ENCODE measurements at regions of chr9 and their contacts with region 1.

Region 1: GRCh38 chr9:89334151-89334550 is 15.9 kb downstream of the SECISBP2 start:
- DNase-seq: no peak
- H3K4me3 ChIP-seq: no peak overlapping the region
- H3K27ac ChIP-seq: no peak overlapping the region
- H3K4me1 ChIP-seq: no peaks in the 10 kb centered on the region
- H3K27me3 ChIP-seq: no peaks in the 10 kb centered on the region
- CTCF ChIP-seq: no peak
- EP300 ChIP-seq: no peak
- POLR2A ChIP-seq: no peak
- RAD21 ChIP-seq: no peak

Region 2: GRCh38 chr9:89122949-89123348 is 211.2 kb before region 1 on chr9:
- CTCF ChIA-PET with region 1: no interaction called
- POLR2A ChIA-PET with region 1: no interaction called
- DNase-seq: no peak
- H3K4me3 ChIP-seq: no peak overlapping the region
- H3K27ac ChIP-seq: no peak overlapping the region
- H3K4me1 ChIP-seq: no peaks in the 10 kb centered on the region
- H3K27me3 ChIP-seq: no peaks in the 10 kb centered on the region
- CTCF ChIP-seq: no peak
- EP300 ChIP-seq: no peak
- POLR2A ChIP-seq: no peak
- RAD21 ChIP-seq: no peak

Region 3: DNA sequence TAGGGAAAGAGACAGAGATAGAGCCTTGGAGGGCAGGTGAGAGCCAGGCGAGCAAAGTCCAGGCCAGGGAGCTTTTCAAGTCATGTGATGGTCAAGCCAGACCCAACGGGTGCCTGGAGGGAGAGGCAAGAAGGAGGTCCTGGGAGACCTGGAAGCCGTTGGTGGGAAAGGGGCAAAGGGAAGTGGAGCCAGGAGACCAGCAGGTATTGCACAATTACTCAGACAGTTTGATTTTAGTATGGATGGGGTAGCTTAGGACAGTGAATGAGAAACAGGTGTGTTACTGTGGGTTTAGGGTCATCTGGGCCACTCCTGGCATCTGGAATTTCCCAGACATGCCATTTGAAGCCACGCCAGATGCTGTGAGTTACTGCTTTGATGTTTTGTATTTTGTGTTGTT is 10.8 kb before region 1 on chr9:
- CTCF ChIA-PET with region 1: interaction called, 3 read pairs
- POLR2A ChIA-PET with region 1: interaction called, 30 read pairs
- DNase-seq: no peak
- H3K4me3 ChIP-seq: no peak overlapping the region
- H3K27ac ChIP-seq: no peak overlapping the region
- H3K4me1 ChIP-seq: peaks cover 0 to 3% (median 0%) of the 10 kb centered on the region in 4 experiments; a peak in 2 of 7 replicates
- H3K27me3 ChIP-seq: no peaks in the 10 kb centered on the region
- CTCF ChIP-seq: no peak
- EP300 ChIP-seq: no peak
- POLR2A ChIP-seq: no peak
- RAD21 ChIP-seq: no peak

Region 4: DNA sequence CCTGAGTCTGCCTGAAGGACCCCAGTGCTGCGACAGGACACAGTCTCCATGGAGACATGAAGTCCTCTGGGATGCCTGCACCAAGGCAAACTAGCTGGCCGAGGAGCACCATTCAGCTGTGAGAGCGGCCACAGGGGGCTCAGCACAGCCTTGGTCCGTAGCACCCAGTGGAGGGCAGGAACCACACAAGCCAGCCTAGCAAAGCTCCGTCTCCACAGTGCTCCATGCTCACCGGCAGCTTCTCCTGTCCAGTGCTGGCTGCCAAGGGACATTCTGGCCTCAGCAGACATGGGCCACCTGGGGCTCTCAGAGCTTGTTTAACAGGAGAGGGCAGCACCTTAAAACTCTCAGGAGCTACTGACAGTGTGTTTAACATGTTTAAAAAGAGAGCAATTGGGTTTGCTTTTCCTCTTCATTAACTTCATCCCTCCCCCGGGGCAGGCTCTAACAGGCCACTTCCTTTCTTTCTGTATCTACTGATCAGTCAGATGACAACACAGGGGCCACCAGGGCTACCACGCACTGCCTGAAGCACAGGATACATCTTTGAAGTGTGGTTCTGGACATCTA is 41.1 kb after region 1 on chr9:
- CTCF ChIA-PET with region 1: no interaction called
- POLR2A ChIA-PET with region 1: no interaction called
- DNase-seq: no peak
- H3K4me3 ChIP-seq: no peak overlapping the region
- H3K27ac ChIP-seq: no peak overlapping the region
- H3K4me1 ChIP-seq: no peaks in the 10 kb centered on the region
- H3K27me3 ChIP-seq: no peaks in the 10 kb centered on the region
- CTCF ChIP-seq: no peak
- EP300 ChIP-seq: no peak
- POLR2A ChIP-seq: no peak
- RAD21 ChIP-seq: no peak

Region 5: DNA sequence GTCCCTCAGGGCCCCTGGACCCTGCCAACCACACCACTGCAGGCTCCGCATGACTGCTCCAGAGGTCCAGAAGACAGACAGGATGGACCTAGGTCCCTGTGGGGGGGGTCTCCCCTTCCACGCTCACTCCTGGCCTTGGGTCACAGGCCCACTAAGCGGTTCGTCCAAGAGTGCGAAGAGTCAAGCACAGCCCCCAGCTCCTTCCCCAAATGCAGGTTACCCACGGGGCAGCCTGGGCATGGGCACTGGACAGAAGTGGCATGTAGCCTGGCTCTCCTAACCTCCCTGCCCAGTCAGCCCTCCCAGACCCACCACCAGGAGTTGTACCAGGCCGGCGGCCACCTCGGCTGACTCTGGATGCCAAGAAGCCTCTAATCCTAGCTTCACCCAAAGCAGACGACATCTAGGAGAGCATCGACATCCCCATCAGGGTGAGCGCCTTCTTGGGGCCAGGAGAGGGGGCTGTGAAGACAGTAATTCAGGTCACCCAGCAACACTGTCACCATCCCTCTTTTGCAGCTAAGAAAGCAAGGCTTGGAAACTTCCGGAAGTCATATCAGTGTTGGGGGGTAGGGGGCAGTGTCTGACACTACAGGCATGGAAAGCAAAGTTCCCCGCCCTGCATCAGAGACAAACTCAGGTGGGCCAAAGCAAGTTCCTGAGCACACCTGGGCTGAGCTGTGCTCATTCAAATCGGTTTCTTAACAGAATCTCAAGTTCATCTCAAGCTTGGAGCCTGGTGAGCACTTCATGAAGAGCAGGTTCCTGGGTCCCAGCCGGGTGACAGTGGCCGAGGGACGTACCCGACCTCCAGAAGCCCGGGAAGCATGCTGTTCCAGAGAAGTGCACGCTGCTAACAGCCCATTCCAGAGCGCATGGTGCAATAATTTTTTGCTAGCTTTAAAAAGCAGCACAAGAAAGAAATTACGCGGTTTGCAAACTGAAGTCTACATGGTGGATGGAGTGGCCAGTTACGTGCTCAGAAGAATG is 95.0 kb after region 1 on chr9:
- CTCF ChIA-PET with region 1: no interaction called
- POLR2A ChIA-PET with region 1: no interaction called
- DNase-seq: peak; percentile 53 to 74
- H3K4me3 ChIP-seq: no peak overlapping the region
- H3K27ac ChIP-seq: peak overlapping the region; percentile 14; the same call in 1 of the 2 replicates
- H3K4me1 ChIP-seq: peaks cover 9 to 30% (median 19%) of the 10 kb centered on the region in 4 experiments
- H3K27me3 ChIP-seq: no peaks in the 10 kb centered on the region
- CTCF ChIP-seq: peak in 2 of 3 experiments; percentile 91; a peak in 3 of 4 replicates
- EP300 ChIP-seq: no peak
- POLR2A ChIP-seq: no peak
- RAD21 ChIP-seq: peak; percentile 80 to 90

Measured in H1 (cell line).